CD8-positive, alpha-beta T cell (primary cell): ENCODE measurements at regions of chr3 and their contacts with region 1.

Region 1: DNA sequence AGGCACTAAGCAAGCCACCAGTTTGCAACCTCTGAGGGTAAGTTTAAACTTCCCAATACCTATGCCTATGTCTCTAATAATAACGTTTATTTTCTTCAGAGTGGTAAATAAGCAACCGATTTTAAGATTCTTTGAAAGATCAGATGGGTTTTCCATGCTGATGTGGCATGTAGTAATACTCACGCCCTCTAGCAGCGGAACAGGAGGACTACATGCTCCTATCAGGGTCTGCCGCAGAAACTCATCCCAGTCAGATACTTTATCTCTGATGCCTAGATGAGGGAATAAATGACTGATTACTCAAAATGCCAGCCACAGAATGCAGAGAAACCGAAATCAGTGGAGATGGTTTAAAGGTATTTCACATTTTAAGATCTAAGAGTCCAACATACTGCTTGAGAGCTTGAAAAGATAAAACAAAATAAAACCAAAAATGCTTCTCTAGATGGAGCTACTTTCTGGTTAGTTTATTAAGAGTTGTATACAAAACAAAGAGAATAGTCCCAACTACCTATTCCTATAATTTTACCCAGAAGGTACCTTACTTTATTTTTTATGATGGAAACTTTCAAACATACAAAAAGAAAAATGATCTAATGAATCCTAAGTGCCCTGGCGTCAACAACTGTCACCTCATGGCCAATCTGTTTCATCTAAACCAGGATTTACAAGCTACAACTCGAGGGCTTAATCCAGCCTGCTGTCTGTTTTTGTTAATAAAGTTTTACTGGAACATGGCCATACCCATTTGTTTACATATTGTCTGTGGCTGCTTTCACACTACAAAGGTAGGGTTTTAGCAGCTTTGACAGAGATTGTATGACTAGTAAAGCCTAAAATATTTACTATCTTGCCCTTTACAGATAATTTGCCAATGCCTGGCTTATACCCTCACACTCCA is 37.5 kb upstream of the STIMATE start:
- DNase-seq: peak; percentile 16 to 76 (median 54)
- ATAC-seq: peak; percentile 97
- H3K4me3 ChIP-seq: no peak overlapping the region
- H3K4me3 Mint-ChIP-seq: no peak overlapping the region
- H3K27ac ChIP-seq: no peak overlapping the region
- H3K27ac Mint-ChIP-seq: no peak overlapping the region
- H3K4me1 ChIP-seq: peaks cover 5% of the 10 kb centered on the region
- H3K4me1 Mint-ChIP-seq: peaks cover 8% of the 10 kb centered on the region
- H3K27me3 ChIP-seq: no peaks in the 10 kb centered on the region
- H3K27me3 Mint-ChIP-seq: no peaks in the 10 kb centered on the region
- CTCF ChIP-seq: peak; percentile 81

Region 2: GRCh38 chr3:52742418-52743041 is 192.3 kb before region 1 on chr3:
- CTCF ChIA-PET with region 1: interaction called, 3 read pairs
- POLR2A ChIA-PET with region 1: no interaction called
- intact Hi-C with region 1: loop called (anchors 5 kb)
- DNase-seq: peak in 2 of 9 experiments; percentile 48 to 58
- ATAC-seq: no peak
- H3K4me3 ChIP-seq: no peak overlapping the region
- H3K4me3 Mint-ChIP-seq: no peak overlapping the region
- H3K27ac ChIP-seq: no peak overlapping the region
- H3K27ac Mint-ChIP-seq: no peak overlapping the region
- H3K4me1 ChIP-seq: no peaks in the 10 kb centered on the region
- H3K4me1 Mint-ChIP-seq: no peaks in the 10 kb centered on the region
- H3K27me3 ChIP-seq: no peaks in the 10 kb centered on the region
- H3K27me3 Mint-ChIP-seq: no peaks in the 10 kb centered on the region
- CTCF ChIP-seq: peak; percentile 55

Region 3: GRCh38 chr3:52845691-52846431 is 89.0 kb before region 1 on chr3:
- CTCF ChIA-PET with region 1: interaction called, 4 read pairs
- POLR2A ChIA-PET with region 1: no interaction called
- intact Hi-C with region 1: loop called (anchors 1 to 5 kb)
- DNase-seq: peak in 5 of 9 experiments; percentile 28 to 40 (median 34)
- ATAC-seq: peak; percentile 49
- H3K4me3 ChIP-seq: no peak overlapping the region
- H3K4me3 Mint-ChIP-seq: no peak overlapping the region
- H3K27ac ChIP-seq: no peak overlapping the region
- H3K27ac Mint-ChIP-seq: no peak overlapping the region
- H3K4me1 ChIP-seq: no peaks in the 10 kb centered on the region
- H3K4me1 Mint-ChIP-seq: no peaks in the 10 kb centered on the region
- H3K27me3 ChIP-seq: no peaks in the 10 kb centered on the region
- H3K27me3 Mint-ChIP-seq: no peaks in the 10 kb centered on the region
- CTCF ChIP-seq: peak; percentile 46

Region 4: DNA sequence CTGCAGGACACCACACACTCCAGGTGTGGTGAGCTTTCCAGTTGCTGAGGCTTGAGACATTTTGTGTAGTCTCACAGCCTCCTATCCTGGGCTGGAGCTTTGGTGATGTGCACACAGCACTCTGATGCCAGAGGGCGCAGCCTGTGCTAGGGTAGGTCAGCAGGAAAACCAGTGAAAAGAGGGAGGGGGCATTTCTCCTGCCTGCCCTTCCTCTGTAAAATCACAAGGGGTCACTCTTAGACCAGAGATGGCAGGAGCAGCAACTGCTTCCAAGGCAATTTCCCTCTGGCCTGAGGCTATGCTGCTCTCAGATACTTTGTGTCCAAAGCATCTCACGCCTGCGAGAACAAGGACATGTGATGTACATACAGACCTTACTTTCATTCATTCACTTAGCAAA is 83.5 kb before region 1 on chr3:
- CTCF ChIA-PET with region 1: interaction called, 4 read pairs
- POLR2A ChIA-PET with region 1: no interaction called
- intact Hi-C with region 1: loop called (anchors 1 to 5 kb)
- DNase-seq: peak in 4 of 9 experiments; percentile 10 to 43 (median 30)
- ATAC-seq: peak; percentile 48
- H3K4me3 ChIP-seq: no peak overlapping the region
- H3K4me3 Mint-ChIP-seq: no peak overlapping the region
- H3K27ac ChIP-seq: no peak overlapping the region
- H3K27ac Mint-ChIP-seq: no peak overlapping the region
- H3K4me1 ChIP-seq: no peaks in the 10 kb centered on the region
- H3K4me1 Mint-ChIP-seq: no peaks in the 10 kb centered on the region
- H3K27me3 ChIP-seq: no peaks in the 10 kb centered on the region
- H3K27me3 Mint-ChIP-seq: no peaks in the 10 kb centered on the region
- CTCF ChIP-seq: no peak

Region 5: GRCh38 chr3:52983336-52983807 is 48.5 kb after region 1 on chr3:
- CTCF ChIA-PET with region 1: interaction called, 3 read pairs
- POLR2A ChIA-PET with region 1: no interaction called
- intact Hi-C with region 1: loop called in 1 of 2 experiments (anchors 5 kb)
- DNase-seq: peak; percentile 10 to 84 (median 58)
- ATAC-seq: peak; percentile 86
- H3K4me3 ChIP-seq: no peak overlapping the region
- H3K4me3 Mint-ChIP-seq: peak overlapping the region; percentile 68
- H3K27ac ChIP-seq: peak overlapping the region; percentile 26 to 66
- H3K27ac Mint-ChIP-seq: peak overlapping the region; percentile 87
- H3K4me1 ChIP-seq: peaks cover 38% of the 10 kb centered on the region
- H3K4me1 Mint-ChIP-seq: peaks cover 46% of the 10 kb centered on the region
- H3K27me3 ChIP-seq: no peaks in the 10 kb centered on the region
- H3K27me3 Mint-ChIP-seq: no peaks in the 10 kb centered on the region
- CTCF ChIP-seq: no peak

Region 6: GRCh38 chr3:53045518-53046170 is 110.8 kb after region 1 on chr3 and contains the start of gene SFMBT1:
- CTCF ChIA-PET with region 1: interaction called, 30 read pairs
- POLR2A ChIA-PET with region 1: interaction called, 5 read pairs
- intact Hi-C with region 1: loop called (anchors 1 to 2 kb)
- DNase-seq: peak; percentile 52 to 91 (median 78)
- ATAC-seq: peak; percentile 49
- H3K4me3 ChIP-seq: peak within 1 kb of the TSS; percentile 85 to 88
- H3K4me3 Mint-ChIP-seq: peak within 1 kb of the TSS; percentile 98
- H3K27ac ChIP-seq: peak within 1 kb of the TSS; percentile 81 to 83
- H3K27ac Mint-ChIP-seq: peak within 1 kb of the TSS; percentile 99
- H3K4me1 ChIP-seq: peaks cover 37% of the 10 kb centered on the region
- H3K4me1 Mint-ChIP-seq: peaks cover 35% of the 10 kb centered on the region
- H3K27me3 ChIP-seq: no peaks in the 10 kb centered on the region
- H3K27me3 Mint-ChIP-seq: no peaks in the 10 kb centered on the region
- CTCF ChIP-seq: no peak
- total RNA-seq, gene SFMBT1: 23.6 to 26.2 TPM

Region 7: DNA sequence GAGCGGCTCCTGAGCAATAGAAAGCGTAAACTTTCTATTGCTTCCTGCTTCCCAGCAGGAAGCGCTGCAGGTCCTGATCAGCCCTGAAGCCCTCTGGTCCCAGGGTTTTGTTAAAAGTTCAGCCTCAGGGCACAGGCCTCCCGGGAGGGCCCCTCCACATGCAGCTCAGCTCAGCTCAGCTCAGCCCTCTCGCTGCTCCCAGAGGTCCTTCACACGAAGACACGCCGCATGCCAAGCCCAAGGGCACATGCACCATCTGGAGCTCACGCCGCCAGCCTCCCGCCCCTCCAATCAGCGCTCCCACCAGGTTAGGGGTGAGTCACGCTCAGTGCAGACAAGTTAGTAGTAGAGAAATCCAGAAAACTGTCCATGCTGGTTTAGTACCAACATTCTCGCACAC is 308.3 kb after region 1 on chr3:
- CTCF ChIA-PET with region 1: no interaction called
- POLR2A ChIA-PET with region 1: no interaction called
- intact Hi-C with region 1: no loop called
- DNase-seq: no peak
- ATAC-seq: no peak
- H3K4me3 ChIP-seq: no peak overlapping the region
- H3K4me3 Mint-ChIP-seq: no peak overlapping the region
- H3K27ac ChIP-seq: no peak overlapping the region
- H3K27ac Mint-ChIP-seq: no peak overlapping the region
- H3K4me1 ChIP-seq: peaks cover 7% of the 10 kb centered on the region
- H3K4me1 Mint-ChIP-seq: peaks cover 19% of the 10 kb centered on the region
- H3K27me3 ChIP-seq: no peaks in the 10 kb centered on the region
- H3K27me3 Mint-ChIP-seq: no peaks in the 10 kb centered on the region
- CTCF ChIP-seq: no peak